Pancreas (tissue), 10 donors: ENCODE measurements at regions of chr1 and their contacts with region 1.

Region 1: DNA sequence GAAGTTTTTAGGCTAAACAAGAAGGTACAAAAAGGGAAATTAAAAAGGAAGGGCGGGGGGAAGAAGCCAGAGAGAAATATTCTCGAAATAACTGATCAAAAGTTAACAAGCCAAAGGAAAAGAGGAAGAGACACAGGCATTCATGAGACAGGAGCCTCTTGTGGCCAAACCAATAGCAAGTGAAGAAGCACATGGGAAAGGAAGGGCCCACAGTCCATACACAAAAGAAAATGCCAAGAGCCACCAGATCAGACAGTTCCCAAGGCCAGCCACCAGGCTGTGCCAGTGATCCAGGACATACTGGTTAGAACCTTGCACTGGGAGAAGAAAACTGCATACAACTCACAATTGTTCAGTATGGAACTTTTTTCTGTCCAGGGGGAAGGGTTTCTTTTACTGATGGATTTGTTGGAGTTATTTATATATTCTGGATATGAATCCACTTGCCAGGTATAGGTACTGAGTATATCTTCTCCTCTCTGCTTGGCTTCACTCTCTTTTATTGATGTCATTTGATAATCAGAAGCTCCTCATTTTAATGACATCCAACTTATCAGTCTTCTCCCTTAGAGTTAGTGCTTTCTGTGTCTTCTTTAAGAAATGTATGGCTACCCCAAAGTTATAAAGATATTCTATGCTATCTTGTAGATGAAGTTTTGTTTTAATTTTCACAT is 76.8 kb downstream of the CD46 start:
- DNase-seq: peak in 3 of 6 donors; percentile 67 to 77 (median 68)
- ATAC-seq: peak; percentile 29 to 63 (median 58)
- H3K4me3 ChIP-seq: no peak overlapping the region
- H3K27ac ChIP-seq: peak overlapping the region in 2 of 4 donors; percentile 98 to 99
- H3K4me1 ChIP-seq: peaks cover 44 to 64% (median 51%) of the 10 kb centered on the region in 3 donors
- H3K27me3 ChIP-seq: no peaks in the 10 kb centered on the region
- CTCF ChIP-seq: peak; percentile 40 to 73 (median 66)

Region 2: DNA sequence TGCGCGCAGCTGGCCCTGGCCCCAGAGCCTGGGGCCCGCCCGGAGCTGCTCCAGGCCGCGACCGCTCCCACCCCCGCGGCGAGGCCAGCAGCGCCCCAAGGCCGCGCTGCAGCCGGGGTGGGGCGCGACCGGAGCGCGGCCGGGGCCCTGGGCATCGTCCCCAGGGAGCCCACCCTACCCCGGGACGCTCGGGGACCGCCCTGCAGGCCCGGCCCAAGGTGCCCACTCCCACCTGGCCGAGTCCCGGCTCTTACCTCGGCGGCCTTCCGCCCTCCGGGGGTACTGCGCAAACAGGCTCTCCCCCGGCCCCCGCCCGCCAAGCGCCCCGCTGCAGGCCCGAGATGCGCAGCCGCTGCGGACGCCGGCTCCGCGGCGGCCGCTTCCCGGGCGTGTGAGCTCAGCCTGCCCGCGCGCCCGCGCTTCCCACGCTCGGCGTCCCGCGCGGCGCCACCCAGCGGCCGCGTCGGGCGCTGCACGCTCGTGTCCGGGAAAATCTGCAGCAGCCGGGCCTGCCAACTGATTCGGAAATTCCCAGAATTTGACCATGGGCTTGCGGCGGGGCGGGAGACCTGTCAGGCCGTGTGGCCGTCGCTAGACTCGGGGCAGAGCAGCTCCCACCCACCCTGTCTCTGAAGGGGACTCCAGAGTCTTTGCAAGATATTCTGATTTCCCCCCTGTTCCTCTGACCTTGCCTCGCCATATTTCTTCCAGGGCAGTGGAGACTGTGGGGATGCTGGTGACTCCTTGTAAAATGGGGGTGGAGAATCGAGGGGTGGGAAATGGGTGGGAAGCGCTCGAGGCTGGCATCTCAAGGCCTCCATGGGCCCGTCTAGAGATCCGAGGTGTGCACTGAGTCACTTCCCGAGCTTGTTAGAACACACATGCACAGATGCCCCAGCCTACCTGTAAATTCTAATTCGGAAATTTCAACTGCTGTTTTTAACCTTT is 40.4 kb after region 1 on chr1:
- intact Hi-C with region 1: loop called in 2 of 3 experiments (anchors 5 kb)
- DNase-seq: peak; percentile 76 to 94 (median 86)
- ATAC-seq: peak; percentile 80 to 88 (median 84)
- H3K4me3 ChIP-seq: peak overlapping the region; percentile 63 to 88 (median 86)
- H3K27ac ChIP-seq: peak overlapping the region; percentile 60 to 89 (median 84)
- H3K4me1 ChIP-seq: peaks cover 0 to 16% (median 3%) of the 10 kb centered on the region in 3 donors
- H3K27me3 ChIP-seq: no peaks in the 10 kb centered on the region
- CTCF ChIP-seq: peak; percentile 62 to 82 (median 69)

Region 3: DNA sequence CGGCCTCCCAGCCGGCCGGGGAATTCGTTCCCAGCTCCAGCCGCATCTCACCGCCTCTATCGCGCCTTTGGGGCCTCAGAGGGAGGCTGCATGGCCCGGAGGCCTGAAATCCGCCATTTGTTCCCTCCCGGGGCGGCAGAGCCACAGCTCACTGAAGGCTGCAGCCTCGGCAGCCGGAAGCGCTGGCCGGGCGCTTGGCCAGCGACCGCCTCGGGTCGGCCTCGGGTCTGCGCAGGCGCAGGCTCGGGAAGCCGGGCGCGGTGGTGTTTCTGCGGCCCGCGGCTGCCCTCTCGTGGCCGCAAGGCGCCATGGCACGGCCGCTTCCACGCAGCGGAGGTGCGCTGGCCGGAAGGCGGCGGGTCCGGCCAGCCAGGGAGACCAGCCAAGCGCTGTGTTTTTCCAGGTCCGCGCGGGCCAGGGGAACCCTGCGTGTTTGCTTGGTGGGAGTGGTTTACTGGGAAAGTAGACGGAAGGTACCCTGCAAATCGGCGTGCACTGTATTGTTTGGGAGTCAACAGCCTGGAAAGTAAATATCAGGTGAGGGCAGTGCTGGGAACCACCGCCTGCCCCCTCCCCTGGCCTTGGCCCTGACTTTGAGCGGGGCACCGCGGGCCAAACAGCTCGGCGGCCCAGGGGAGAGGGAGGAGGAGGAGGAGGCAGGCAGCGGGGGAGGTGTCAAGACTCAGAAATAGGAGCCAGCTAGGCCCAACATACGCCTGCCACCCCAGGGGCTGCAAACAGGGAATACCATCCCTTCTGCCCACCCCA is 135.0 kb after region 1 on chr1:
- intact Hi-C with region 1: loop called in 1 of 3 experiments (anchors 10 kb)
- DNase-seq: peak; percentile 95 to 99 (median 98)
- ATAC-seq: peak; percentile 87 to 92 (median 92)
- H3K4me3 ChIP-seq: peak overlapping the region; percentile 28 to 60 (median 46)
- H3K27ac ChIP-seq: peak overlapping the region; percentile 88 to 98 (median 94)
- H3K4me1 ChIP-seq: peaks cover 6 to 17% (median 14%) of the 10 kb centered on the region in 3 donors
- H3K27me3 ChIP-seq: no peaks in the 10 kb centered on the region
- CTCF ChIP-seq: peak; percentile 100